Activated T-helper 2 cell treated with anti-CD3 and anti-CD28 coated beads, Interferon-gamma antibody, Interleukin-2, Interleukin-4, amounts not matched to agents 10 μg/mL and 5 μg/mL and 100 μg/mL, durations not matched to agents 14 hours and 24 hours and 36 hours (primary cell): ENCODE measurements at regions of chr4 and their contacts with region 1.

Region 1: DNA sequence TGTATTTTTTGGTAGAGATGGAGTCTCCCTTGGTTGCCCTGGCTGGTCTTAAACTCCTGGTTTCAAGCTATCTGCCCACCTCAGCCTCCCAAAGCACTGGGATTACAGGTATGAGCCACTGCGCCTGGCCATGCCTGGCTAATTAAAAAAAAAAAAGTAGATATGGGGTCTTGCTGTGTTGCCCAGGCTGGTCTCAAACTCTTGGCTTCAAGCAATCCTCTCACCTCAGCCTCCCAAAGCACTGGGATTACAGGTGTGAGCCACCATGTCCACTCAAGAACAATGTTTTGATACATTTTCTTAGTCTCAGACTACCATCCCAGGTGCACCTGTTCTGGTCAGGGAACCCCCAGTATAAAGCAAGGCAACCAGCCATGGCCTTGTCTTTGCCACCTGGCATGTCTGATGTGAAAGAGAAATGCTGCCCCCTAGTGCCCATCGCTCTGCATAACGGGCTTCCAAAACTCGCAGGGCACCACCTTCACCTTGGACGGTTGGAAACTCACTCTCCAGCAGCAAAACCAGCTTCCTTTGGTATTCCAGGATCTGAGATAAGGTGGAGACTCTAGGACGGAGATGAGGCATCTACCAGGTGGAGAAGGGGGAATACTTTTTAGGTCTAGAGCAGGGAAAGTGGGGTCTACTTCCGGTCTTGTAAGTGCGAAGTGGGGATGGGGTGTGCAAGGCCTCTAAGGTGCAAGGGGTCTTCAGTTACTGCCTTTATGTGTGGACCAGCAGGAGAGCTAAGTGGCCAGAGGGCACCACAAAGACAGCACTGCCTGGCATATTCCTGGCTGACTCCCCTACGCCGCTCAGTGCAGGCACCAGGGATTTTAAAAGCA is 47.7 kb upstream of the AFAP1 start:
- DNase-seq: peak; percentile 62
- H3K4me3 Mint-ChIP-seq: no peak overlapping the region
- H3K27ac Mint-ChIP-seq: no peak overlapping the region
- H3K4me1 Mint-ChIP-seq: peaks cover 6% of the 10 kb centered on the region
- H3K27me3 Mint-ChIP-seq: no peaks in the 10 kb centered on the region

Region 2: GRCh38 chr4:7973545-7973981 is 13.8 kb before region 1 on chr4:
- intact Hi-C with region 1: loop called (anchors 2 kb)
- DNase-seq: no peak
- H3K4me3 Mint-ChIP-seq: peak overlapping the region; percentile 98
- H3K27ac Mint-ChIP-seq: peak overlapping the region; percentile 99
- H3K4me1 Mint-ChIP-seq: peaks cover 47% of the 10 kb centered on the region
- H3K27me3 Mint-ChIP-seq: no peaks in the 10 kb centered on the region